Breast epithelium (tissue), 4 donors: ENCODE measurements at regions of chr18 and their contacts with region 1.

Region 1: DNA sequence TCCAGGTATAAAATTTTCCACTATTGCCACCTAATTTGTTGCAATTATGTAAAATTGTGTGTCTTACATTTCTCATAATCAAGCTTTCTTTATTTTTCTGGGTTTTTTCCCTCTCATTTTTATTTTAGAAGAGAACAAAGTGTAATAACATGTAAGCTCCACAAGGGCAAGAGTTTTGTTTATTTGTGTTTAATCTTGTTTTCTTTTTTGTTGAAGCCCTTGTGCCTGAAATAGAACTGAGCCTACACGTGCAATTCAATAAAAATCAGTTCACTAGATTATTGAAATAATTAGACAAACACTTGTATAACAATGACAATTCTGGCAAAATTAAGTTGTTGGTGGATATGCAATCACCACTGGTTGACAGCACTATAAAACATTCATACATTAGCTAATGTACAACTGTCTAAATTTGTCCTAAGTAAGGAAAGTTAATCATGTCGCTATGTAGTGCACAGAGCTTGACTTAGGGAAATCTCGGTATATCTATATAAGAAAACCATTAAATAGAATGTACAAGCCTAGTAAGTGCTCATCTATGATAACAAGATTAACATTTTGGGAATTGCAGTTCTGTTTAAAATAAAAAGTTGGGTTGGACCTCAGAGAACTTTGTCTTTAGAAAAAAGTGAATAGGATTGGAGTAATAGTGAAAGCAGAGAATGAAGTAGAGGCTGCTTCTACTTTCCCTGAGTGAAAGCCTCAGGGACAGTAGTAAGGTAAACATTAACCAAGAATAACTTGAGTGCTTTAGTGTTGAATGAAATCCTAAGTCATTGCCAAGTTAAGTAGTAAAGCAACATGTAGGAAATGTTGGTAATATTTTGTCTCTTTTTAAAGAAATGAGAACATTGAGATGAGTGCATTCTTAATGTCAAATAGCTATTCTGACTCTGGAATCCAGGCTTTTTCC is 37.4 kb upstream of the NOL4 start:
- DNase-seq: no peak
- H3K4me3 ChIP-seq: no peak overlapping the region
- H3K27ac ChIP-seq: no peak overlapping the region
- H3K4me1 ChIP-seq: no peaks in the 10 kb centered on the region
- H3K27me3 ChIP-seq: no peaks in the 10 kb centered on the region
- CTCF ChIP-seq: no peak
- POLR2A ChIP-seq: no peak

Region 2: DNA sequence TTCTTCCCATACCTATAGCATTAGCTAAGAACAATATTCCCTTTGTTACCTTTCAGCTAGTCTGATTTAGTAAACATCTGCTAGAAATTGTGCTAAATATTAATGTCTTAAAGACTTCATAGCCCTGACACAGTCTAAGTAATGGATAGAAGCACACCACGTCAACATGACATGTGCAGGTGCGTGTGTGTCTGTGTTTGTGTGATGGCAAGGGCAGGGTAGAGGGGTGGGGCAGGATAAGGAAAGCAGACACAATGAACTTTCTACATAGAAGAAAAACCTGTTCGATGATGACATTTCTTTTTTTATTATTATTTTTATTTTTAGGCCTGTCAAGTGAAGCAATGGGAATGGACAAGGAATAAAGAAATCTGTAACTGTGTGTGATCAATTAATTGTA is 260.7 kb before region 1 on chr18:
- intact Hi-C with region 1: no loop called
- DNase-seq: no peak
- H3K4me3 ChIP-seq: no peak overlapping the region
- H3K27ac ChIP-seq: no peak overlapping the region
- H3K4me1 ChIP-seq: no peaks in the 10 kb centered on the region
- H3K27me3 ChIP-seq: no peaks in the 10 kb centered on the region
- CTCF ChIP-seq: no peak
- POLR2A ChIP-seq: no peak

Region 3: GRCh38 chr18:34083910-34084535 is 178.1 kb before region 1 on chr18:
- intact Hi-C with region 1: no loop called
- DNase-seq: no peak
- H3K4me3 ChIP-seq: no peak overlapping the region
- H3K27ac ChIP-seq: no peak overlapping the region
- H3K4me1 ChIP-seq: no peaks in the 10 kb centered on the region
- H3K27me3 ChIP-seq: no peaks in the 10 kb centered on the region
- CTCF ChIP-seq: no peak
- POLR2A ChIP-seq: no peak

Region 4: GRCh38 chr18:34280653-34281052 is 18.5 kb after region 1 on chr18:
- intact Hi-C with region 1: loop called (anchors 2 kb)
- DNase-seq: no peak
- H3K4me3 ChIP-seq: no peak overlapping the region
- H3K27ac ChIP-seq: no peak overlapping the region
- H3K4me1 ChIP-seq: no peaks in the 10 kb centered on the region
- H3K27me3 ChIP-seq: no peaks in the 10 kb centered on the region
- CTCF ChIP-seq: no peak
- POLR2A ChIP-seq: no peak

Region 5: DNA sequence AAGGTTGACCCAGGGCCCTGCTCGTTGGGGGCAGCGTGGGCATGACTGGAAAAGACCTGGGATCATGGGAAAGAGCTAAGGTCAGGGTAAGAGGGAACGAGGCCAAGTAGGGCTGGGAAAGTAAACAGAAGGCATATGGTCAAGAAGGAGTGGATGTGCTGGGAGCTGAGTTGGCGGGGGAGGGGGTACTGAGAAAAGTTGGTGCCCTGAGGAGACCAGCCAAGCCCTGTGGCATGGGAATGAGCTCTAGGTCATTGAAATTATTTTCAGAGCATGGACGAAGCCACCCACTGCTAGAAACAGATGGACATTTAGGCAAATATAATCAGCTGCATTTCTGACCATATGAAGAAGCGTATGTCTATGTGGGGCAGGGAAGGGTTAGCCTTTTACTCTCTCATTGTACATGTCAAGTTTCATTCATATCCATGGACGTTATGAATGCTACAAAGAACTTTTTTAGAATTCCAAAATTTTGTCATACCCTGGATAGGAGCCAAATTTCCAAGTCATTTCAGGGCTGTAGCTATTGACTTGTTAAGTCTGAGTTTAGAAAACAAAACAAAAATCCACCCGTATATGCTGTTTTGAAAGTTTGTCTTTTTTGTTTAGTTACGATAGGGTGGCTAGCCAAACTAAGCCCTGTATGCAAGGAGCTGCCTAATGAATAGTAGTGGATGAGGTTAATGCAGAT is 798.1 kb after region 1 on chr18:
- intact Hi-C with region 1: no loop called
- DNase-seq: no peak
- H3K4me3 ChIP-seq: no peak overlapping the region
- H3K27ac ChIP-seq: no peak overlapping the region
- H3K4me1 ChIP-seq: no peaks in the 10 kb centered on the region
- H3K27me3 ChIP-seq: no peaks in the 10 kb centered on the region
- CTCF ChIP-seq: no peak
- POLR2A ChIP-seq: no peak